ENCODE measurements at regions of chr5 and their contacts with region 1.

Region 1: DNA sequence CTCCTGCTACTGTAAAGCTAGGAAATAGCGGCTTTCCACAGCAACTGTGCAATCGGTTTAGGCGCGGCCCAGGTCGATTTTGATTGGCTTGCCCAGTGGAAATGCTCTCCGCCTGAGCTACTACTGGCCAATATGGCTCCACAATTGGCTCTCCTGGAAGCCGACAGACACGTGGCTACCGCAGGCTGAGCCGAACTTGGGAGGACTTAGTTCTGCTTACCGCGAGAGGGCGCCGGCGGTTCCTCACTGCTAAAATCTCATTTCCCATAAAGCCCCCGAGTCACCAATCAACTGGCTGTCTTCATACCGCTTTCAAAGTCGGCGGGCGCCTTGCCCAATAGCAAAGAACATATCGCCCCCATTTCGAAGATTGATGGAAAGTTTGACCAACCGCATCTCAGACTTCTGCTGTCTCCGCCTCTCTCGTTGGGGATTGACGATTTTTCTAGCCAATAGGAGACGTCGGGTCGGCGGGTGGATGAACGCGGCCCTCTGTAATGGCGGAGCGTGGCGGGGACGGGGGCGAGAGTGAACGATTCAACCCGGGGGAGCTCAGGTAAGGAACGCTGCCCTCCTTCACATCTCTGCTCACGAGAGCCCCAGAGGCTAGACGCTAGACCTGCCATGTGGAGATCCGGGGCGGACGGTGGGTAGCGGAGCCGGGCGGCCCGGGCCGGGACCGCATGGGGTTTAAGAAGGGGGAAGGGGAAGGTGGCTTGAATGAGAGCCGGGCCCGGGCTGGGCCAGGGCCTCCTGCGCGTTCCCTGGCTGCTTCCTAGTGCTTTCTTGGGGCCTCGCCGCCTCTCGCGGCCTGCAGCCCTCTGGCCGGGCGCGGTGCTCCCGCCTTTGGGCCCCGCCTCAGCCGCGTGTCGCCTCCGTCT is at the start of gene TCERG1:
- DNase-seq: peak; percentile 99
- ATAC-seq: peak; percentile 92
- H3K4me3 Mint-ChIP-seq: peak within 1 kb of the TSS; percentile 97
- H3K27ac Mint-ChIP-seq: peak within 1 kb of the TSS; percentile 99
- H3K4me1 Mint-ChIP-seq: peaks cover 39% of the 10 kb centered on the region
- H3K27me3 Mint-ChIP-seq: no peaks in the 10 kb centered on the region
- CTCF ChIP-seq: peak; percentile 41
- total RNA-seq, gene TCERG1: 116 to 120 TPM

Region 2: DNA sequence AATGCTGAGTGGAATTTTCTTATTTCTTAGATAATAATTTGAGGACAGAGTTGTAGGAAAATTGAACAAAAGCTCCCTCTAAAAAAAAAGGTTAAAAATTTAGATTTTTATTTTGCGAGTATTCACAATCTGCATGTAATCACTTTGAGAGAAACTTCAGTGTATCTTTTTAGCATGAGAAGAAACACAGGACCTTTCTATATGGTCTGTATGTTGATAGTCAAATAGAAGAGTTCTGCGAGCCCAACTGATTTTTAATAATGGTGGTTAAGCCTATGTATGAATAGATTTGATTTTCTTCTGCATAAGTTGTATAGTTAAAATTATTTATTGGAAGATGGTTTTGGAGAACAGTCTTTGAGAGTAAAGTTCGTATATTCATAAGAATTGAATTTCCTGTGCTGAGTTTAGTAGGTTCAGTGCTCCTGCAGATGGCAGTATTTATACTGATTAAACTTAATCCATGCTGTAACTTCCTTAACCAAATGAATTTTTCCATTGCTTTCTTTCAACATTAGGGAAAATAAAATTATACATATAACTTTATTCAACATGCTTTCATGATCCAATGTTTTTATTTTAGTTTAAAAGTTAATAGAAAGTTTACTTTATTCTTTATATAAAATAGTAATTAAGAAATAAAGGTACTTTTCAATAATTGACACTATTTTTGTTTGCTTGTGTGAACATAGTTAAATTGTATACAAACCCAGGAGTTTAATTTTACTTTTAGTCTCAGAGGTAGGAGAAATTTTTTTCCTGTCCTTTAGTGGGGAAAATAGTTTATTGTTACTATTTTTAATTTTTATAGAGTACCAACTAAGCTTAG is 19.6 kb after region 1 on chr5:
- CTCF ChIA-PET with region 1: interaction called, 10 read pairs
- POLR2A ChIA-PET with region 1: no interaction called
- intact Hi-C with region 1: no loop called
- DNase-seq: no peak
- ATAC-seq: no peak
- H3K4me3 Mint-ChIP-seq: no peak overlapping the region
- H3K27ac Mint-ChIP-seq: no peak overlapping the region
- H3K4me1 Mint-ChIP-seq: peaks cover 16% of the 10 kb centered on the region
- H3K27me3 Mint-ChIP-seq: no peaks in the 10 kb centered on the region
- CTCF ChIP-seq: no peak

Region 3: GRCh38 chr5:146965761-146966659 is 518.9 kb after region 1 on chr5:
- CTCF ChIA-PET with region 1: no interaction called
- POLR2A ChIA-PET with region 1: no interaction called
- intact Hi-C with region 1: no loop called
- DNase-seq: peak; percentile 67
- ATAC-seq: peak; percentile 87
- H3K4me3 Mint-ChIP-seq: no peak overlapping the region
- H3K27ac Mint-ChIP-seq: no peak overlapping the region
- H3K4me1 Mint-ChIP-seq: peaks cover 3% of the 10 kb centered on the region
- H3K27me3 Mint-ChIP-seq: no peaks in the 10 kb centered on the region
- CTCF ChIP-seq: peak; percentile 86

Measured in activated CD8-positive, alpha-beta T cell treated with anti-CD3 and anti-CD28 coated beads for 36 hours (primary cell).